ENCODE measurements at regions of chr18 and their contacts with region 1.

Region 1: GRCh38 chr18:25038261-25038660 is 313.7 kb downstream of the ZNF521 start:
- DNase-seq: no peak
- ATAC-seq: no peak
- H3K4me3 ChIP-seq: no peak overlapping the region
- H3K27ac ChIP-seq: no peak overlapping the region
- H3K4me1 ChIP-seq: no peaks in the 10 kb centered on the region
- H3K27me3 ChIP-seq: no peaks in the 10 kb centered on the region
- CTCF ChIP-seq: no peak

Region 2: DNA sequence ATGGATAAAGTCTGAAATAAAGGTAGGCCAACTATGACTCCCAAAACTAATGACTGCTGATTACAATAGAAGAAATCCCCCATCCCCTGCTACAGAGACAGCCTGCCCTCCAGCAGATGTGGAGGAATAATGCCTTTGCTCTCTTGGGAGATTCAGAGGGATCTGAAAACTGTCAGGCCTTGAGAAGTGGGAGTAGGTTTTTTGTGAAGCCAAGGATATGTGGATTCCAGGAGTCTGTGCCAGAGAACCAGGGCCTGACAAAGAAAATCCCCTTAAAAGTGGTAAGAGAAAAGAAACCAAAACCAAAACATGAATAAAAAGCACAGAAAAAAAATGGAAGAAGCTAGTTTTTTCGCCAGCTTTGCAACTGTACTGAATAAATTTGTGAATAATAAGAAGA is 83.9 kb before region 1 on chr18:
- intact Hi-C with region 1: no loop called
- DNase-seq: no peak
- ATAC-seq: no peak
- H3K4me3 ChIP-seq: no peak overlapping the region
- H3K27ac ChIP-seq: no peak overlapping the region
- H3K4me1 ChIP-seq: no peaks in the 10 kb centered on the region
- H3K27me3 ChIP-seq: no peaks in the 10 kb centered on the region
- CTCF ChIP-seq: no peak

Region 3: DNA sequence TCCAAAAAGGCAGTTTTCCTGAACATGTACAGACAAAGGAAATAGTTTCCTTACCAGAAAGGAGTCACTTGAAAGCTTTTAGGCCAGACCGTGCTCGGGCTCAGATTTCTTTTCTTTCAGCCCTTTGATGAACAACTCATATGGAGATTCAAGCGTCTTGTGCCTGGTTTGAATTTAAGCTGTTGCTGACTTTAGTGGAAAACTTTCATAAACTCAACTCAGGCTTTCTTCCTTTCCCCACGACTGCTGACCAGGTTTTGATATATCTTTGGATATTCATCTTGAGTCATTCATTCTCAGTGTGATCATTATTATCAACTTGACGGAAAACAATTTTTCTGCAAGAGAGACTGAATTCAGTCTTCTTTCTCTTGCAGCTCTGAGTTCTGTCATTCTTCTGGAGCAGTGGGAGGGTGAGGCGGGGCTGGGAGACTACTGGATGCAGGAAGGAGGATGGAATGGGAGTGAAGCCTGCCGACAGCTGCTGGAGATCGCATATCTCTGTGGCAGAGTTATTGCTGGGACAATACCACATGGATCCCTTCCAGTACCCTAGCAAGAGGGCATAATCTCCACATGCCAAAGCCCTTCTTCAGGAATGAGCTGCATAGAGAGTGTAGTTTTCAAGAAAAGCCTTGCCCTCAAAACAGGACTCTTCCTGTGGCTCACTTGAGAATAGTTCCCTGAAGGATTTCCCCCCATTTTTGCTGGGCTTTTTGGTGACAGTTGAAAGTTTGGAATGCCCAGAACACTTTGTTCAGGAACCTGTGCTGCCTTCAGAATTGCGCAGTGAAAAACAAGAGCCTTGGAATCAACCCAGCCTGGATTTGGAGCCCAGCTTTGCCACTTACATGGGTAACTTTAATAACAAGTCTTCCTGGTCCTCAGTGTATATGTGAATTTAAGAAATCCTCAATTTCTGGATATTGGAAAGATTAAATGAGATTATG is 50.7 kb before region 1 on chr18:
- intact Hi-C with region 1: loop called (anchors 10 kb)
- DNase-seq: no peak
- ATAC-seq: peak; percentile 29 to 32
- H3K4me3 ChIP-seq: no peak overlapping the region
- H3K27ac ChIP-seq: peak overlapping the region; percentile 9
- H3K4me1 ChIP-seq: peaks cover 5% of the 10 kb centered on the region
- H3K27me3 ChIP-seq: no peaks in the 10 kb centered on the region
- CTCF ChIP-seq: no peak

Region 4: DNA sequence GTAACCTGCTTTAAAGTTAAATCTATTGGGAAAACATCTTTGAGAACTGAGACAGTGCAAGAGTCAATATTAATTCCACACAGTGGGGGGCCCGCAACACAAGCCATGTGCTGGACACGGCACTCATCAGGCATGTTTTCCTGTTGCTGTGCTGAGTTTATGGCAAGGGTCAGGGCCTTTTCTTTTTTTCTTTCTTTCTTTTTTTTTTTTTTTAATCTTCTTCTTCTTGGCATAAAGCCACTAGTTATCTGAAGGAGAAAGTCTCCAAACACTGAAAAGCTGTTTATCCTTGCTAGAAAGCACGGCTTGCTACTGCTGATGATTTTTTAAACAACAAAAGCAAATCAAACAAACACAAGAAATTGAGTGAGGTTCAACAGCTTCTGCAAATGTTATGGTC is 61.6 kb after region 1 on chr18:
- intact Hi-C with region 1: no loop called
- DNase-seq: no peak
- ATAC-seq: no peak
- H3K4me3 ChIP-seq: no peak overlapping the region
- H3K27ac ChIP-seq: no peak overlapping the region
- H3K4me1 ChIP-seq: peaks cover 22% of the 10 kb centered on the region
- H3K27me3 ChIP-seq: no peaks in the 10 kb centered on the region
- CTCF ChIP-seq: no peak

Measured in lower lobe of right lung (tissue), 2 donors.